Left ventricle myocardium inferior (tissue), 1 donor: ENCODE measurements at regions of chr2 and their contacts with region 1.

Region 1: GRCh38 chr2:137467246-137467862 is 496.9 kb upstream of the HNMT start:
- DNase-seq: no peak
- H3K4me3 ChIP-seq: no peak overlapping the region
- H3K27ac ChIP-seq: no peak overlapping the region
- H3K4me1 ChIP-seq: no peaks in the 10 kb centered on the region
- H3K27me3 ChIP-seq: no peaks in the 10 kb centered on the region
- CTCF ChIP-seq: peak; percentile 71

Region 2: GRCh38 chr2:137411570-137411969 is 55.8 kb before region 1 on chr2:
- intact Hi-C with region 1: no loop called
- DNase-seq: no peak
- H3K4me3 ChIP-seq: no peak overlapping the region
- H3K27ac ChIP-seq: no peak overlapping the region
- H3K4me1 ChIP-seq: no peaks in the 10 kb centered on the region
- H3K27me3 ChIP-seq: no peaks in the 10 kb centered on the region
- CTCF ChIP-seq: no peak

Region 3: DNA sequence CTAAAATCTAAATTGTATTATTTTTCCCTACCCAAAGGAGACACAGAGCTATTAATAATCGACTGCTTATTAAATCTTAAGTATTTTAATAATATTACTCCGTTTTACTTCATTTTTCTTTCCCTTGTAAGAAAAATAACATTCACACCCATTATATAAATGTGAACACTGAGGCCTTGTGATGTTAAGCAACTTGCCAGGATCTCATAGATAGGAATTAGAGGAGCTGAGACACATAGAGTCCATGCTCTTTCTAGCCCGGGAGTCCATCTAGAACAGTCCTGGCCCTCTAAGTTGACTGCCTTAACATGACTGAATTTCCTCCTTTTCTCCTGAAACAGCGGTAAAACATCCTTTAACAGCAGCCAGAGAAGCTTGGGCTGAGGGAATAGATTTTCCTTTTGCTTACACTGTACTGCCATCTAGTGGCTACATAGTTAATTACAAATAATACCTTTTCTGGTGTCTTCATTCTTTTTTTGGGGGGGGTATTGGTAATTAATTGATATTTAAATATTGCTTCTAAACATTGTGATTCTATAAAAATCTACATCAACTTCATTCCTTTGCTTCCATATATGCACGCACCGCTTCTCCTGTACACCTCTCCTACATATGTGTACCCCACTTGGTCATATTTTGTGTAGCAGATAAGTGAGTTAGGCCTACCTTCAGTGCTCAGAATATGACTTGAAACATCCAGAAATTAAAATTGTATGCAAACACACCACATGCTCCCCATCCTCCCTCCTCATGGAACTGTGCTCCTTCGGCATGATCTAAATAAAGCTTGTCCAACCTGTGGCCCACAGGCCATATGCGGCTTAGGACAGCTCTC is 371.1 kb after region 1 on chr2:
- intact Hi-C with region 1: loop called (anchors 10 kb)
- DNase-seq: no peak
- H3K4me3 ChIP-seq: no peak overlapping the region
- H3K27ac ChIP-seq: no peak overlapping the region
- H3K4me1 ChIP-seq: no peaks in the 10 kb centered on the region
- H3K27me3 ChIP-seq: peaks cover 13% of the 10 kb centered on the region
- CTCF ChIP-seq: peak; percentile 73